ENCODE measurements at regions of chr17 and their contacts with region 1.

Region 1: GRCh38 chr17:3913531-3914311 is 2.5 kb downstream of the P2RX1 start:
- DNase-seq: peak; percentile 91
- H3K4me3 ChIP-seq: peak overlapping the region in 1 of 2 experiments; percentile 36; a peak in 1 of 4 replicates
- H3K27ac ChIP-seq: no peak overlapping the region
- H3K4me1 ChIP-seq: peaks cover 0 to 16% of the 10 kb centered on the region in 2 experiments; a peak in 1 of 4 replicates
- H3K27me3 ChIP-seq: no peaks in the 10 kb centered on the region
- CTCF ChIP-seq: peak; percentile 95
- EP300 ChIP-seq: no peak
- RAD21 ChIP-seq: peak; percentile 93

Region 2: DNA sequence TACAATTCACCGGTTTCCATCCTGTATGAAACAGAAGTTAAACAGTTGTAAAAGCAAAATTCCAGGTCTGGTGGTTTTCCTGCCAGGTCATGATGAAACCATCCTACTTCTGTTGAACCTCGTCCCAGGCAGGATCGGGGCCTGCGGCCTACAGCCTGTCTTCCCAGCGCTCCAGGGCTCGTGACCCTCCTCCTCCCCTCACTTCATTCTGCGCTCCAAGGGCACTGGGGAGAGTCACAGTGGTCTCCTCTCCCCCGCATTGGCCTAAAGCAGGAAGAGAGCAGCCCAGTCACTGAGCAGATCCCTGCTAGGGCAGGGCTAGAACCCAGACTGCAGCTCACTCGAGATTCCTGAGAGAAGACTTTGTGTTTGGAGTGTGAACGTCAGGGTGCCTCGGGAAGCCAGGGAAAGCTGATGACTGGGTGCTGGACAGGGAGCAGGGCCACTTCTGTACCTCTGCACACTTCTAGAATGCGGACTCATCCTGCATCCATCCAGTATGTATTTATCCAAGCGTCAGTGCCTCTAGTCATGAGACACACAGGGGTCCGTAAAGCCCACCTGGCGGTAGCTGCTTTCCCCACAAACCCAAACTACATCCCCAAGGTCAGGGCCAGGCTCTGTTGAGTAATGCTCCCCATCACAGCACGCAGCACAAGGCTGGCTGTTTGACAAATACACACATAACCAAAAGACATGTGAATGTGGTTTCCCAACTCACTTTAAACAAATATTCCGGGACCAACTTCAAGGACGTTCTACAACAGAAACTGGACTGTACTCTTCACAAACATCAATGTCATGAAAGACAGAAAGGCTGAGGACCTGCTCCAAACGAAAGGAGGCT is 111.0 kb before region 1 on chr17:
- CTCF ChIA-PET with region 1: no interaction called
- POLR2A ChIA-PET with region 1: no interaction called
- DNase-seq: no peak
- H3K4me3 ChIP-seq: no peak overlapping the region
- H3K27ac ChIP-seq: peak overlapping the region in 1 of 2 experiments; percentile 59; a peak in 2 of 4 replicates
- H3K4me1 ChIP-seq: peaks cover 0 to 11% of the 10 kb centered on the region in 2 experiments; a peak in 1 of 4 replicates
- H3K27me3 ChIP-seq: no peaks in the 10 kb centered on the region
- CTCF ChIP-seq: no peak
- EP300 ChIP-seq: no peak
- RAD21 ChIP-seq: no peak

Region 3: GRCh38 chr17:3857121-3858100 is 56.3 kb before region 1 on chr17:
- CTCF ChIA-PET with region 1: interaction called, 41 read pairs
- POLR2A ChIA-PET with region 1: no interaction called
- DNase-seq: peak; percentile 21
- H3K4me3 ChIP-seq: no peak overlapping the region
- H3K27ac ChIP-seq: no peak overlapping the region
- H3K4me1 ChIP-seq: no peaks in the 10 kb centered on the region
- H3K27me3 ChIP-seq: no peaks in the 10 kb centered on the region
- CTCF ChIP-seq: no peak
- EP300 ChIP-seq: no peak
- RAD21 ChIP-seq: no peak

Region 4: DNA sequence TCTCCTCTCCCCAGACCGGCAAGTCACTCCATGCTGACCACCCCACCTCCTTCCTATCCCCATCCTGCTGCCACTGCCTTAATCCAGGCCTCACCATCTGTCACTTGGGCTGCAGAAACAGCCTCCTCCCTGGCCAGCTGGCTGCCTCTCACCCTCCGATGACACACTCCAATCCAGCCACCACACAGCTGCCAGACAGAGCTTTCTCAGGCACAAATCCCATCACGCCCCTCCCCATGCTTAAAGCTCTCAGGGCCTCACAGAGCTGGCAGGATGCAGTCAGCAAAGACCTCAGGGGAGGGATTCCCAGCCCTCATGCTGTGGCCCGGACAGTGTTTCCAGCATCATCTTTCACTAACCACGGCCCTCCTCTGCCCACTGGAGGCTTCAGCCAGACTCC is 34.5 kb before region 1 on chr17:
- CTCF ChIA-PET with region 1: interaction called, 11 read pairs
- POLR2A ChIA-PET with region 1: no interaction called
- DNase-seq: peak; percentile 85
- H3K4me3 ChIP-seq: no peak overlapping the region
- H3K27ac ChIP-seq: peak overlapping the region in 1 of 2 experiments; percentile 73; a peak in 2 of 4 replicates
- H3K4me1 ChIP-seq: peaks cover 0 to 23% of the 10 kb centered on the region in 2 experiments; a peak in 1 of 4 replicates
- H3K27me3 ChIP-seq: no peaks in the 10 kb centered on the region
- CTCF ChIP-seq: no peak
- EP300 ChIP-seq: no peak; a peak in 1 of 4 replicates
- RAD21 ChIP-seq: peak; percentile 3; the same call in 1 of the 2 replicates

Region 5: GRCh38 chr17:3935140-3935542 is 21.4 kb after region 1 on chr17:
- CTCF ChIA-PET with region 1: interaction called, 14 read pairs
- POLR2A ChIA-PET with region 1: no interaction called
- DNase-seq: peak; percentile 75
- H3K4me3 ChIP-seq: no peak overlapping the region
- H3K27ac ChIP-seq: no peak overlapping the region
- H3K4me1 ChIP-seq: no peaks in the 10 kb centered on the region
- H3K27me3 ChIP-seq: no peaks in the 10 kb centered on the region
- CTCF ChIP-seq: peak; percentile 43
- EP300 ChIP-seq: no peak
- RAD21 ChIP-seq: peak; percentile 74

Region 6: GRCh38 chr17:3998436-3998835 is 84.7 kb after region 1 on chr17:
- CTCF ChIA-PET with region 1: interaction called, 49 read pairs
- POLR2A ChIA-PET with region 1: no interaction called
- DNase-seq: no peak
- H3K4me3 ChIP-seq: no peak overlapping the region
- H3K27ac ChIP-seq: no peak overlapping the region
- H3K4me1 ChIP-seq: no peaks in the 10 kb centered on the region
- H3K27me3 ChIP-seq: no peaks in the 10 kb centered on the region
- CTCF ChIP-seq: no peak
- EP300 ChIP-seq: no peak
- RAD21 ChIP-seq: no peak

Region 7: DNA sequence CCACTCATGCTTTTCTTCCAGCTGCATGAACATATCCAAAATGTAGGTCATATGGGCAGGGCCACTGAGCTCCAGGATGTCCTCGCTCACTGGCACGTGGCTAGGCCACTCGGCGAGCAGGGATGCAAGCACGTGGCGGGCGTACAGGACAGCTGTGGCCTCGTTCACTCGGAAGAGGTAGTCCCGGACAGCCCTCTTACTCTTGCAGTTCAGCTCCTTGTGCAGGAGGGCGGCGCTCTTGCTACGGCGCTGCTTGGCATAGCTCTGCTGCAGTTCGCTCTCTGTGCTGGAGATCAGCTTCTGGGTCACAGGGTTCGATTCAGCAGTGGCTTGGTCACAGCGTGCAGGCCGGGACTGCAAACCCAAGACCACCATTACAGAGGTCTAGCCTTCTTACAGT is 103.7 kb after region 1 on chr17:
- CTCF ChIA-PET with region 1: interaction called, 18 read pairs
- POLR2A ChIA-PET with region 1: no interaction called
- DNase-seq: no peak
- H3K4me3 ChIP-seq: no peak overlapping the region
- H3K27ac ChIP-seq: no peak overlapping the region
- H3K4me1 ChIP-seq: no peaks in the 10 kb centered on the region
- H3K27me3 ChIP-seq: no peaks in the 10 kb centered on the region
- CTCF ChIP-seq: peak; percentile 37
- EP300 ChIP-seq: no peak
- RAD21 ChIP-seq: no peak

Measured in SK-N-SH (cell line).